Natural killer cell (primary cell): ENCODE measurements at regions of chr12 and their contacts with region 1.

Region 1: GRCh38 chr12:75437564-75437963 is 43.0 kb upstream of the GLIPR1 start:
- DNase-seq: peak in 1 of 2 donors; percentile 72
- ATAC-seq: peak; percentile 78 to 98 (median 96)
- H3K4me3 ChIP-seq: no peak overlapping the region
- H3K4me3 Mint-ChIP-seq: no peak overlapping the region
- H3K27ac ChIP-seq: no peak overlapping the region
- H3K27ac Mint-ChIP-seq: no peak overlapping the region
- H3K4me1 ChIP-seq: peaks cover 7% of the 10 kb centered on the region
- H3K4me1 Mint-ChIP-seq: peaks cover 6% of the 10 kb centered on the region in 2 donors
- H3K27me3 ChIP-seq: no peaks in the 10 kb centered on the region
- H3K27me3 Mint-ChIP-seq: peaks cover 0 to 6% of the 10 kb centered on the region in 2 donors
- CTCF ChIP-seq: peak; percentile 52

Region 2: DNA sequence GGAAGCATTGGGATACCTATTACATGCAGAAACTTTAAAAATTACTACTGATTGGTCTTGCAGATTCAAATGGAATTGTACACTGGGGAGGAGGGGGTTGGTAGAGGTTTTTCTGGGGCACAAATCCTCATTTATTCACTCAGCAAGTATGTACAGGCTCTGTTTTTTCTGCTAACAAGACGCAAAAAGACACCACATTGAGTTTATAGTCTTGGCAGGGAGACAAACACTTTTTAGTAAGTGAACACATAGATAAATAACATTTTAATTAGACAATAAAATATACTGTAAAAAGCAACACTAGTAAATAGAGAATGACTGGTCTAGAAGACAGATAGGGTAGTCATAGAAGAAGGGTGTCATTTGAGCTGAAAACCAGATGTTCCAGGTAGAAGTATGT is 22.9 kb before region 1 on chr12:
- intact Hi-C with region 1: no loop called
- DNase-seq: no peak
- ATAC-seq: no peak
- H3K4me3 ChIP-seq: no peak overlapping the region
- H3K4me3 Mint-ChIP-seq: no peak overlapping the region
- H3K27ac ChIP-seq: no peak overlapping the region
- H3K27ac Mint-ChIP-seq: no peak overlapping the region
- H3K4me1 ChIP-seq: no peaks in the 10 kb centered on the region
- H3K4me1 Mint-ChIP-seq: no peaks in the 10 kb centered on the region
- H3K27me3 ChIP-seq: no peaks in the 10 kb centered on the region
- H3K27me3 Mint-ChIP-seq: peaks cover 0 to 7% of the 10 kb centered on the region in 2 donors
- CTCF ChIP-seq: no peak

Region 3: GRCh38 chr12:75505706-75506312 is 68.2 kb after region 1 on chr12:
- intact Hi-C with region 1: loop called (anchors 1 kb)
- DNase-seq: peak in 1 of 2 donors; percentile 61
- ATAC-seq: peak; percentile 44 to 72 (median 58)
- H3K4me3 ChIP-seq: no peak overlapping the region
- H3K4me3 Mint-ChIP-seq: no peak overlapping the region
- H3K27ac ChIP-seq: no peak overlapping the region
- H3K27ac Mint-ChIP-seq: peak overlapping the region; percentile 54 to 65
- H3K4me1 ChIP-seq: no peaks in the 10 kb centered on the region
- H3K4me1 Mint-ChIP-seq: peaks cover 11 to 20% of the 10 kb centered on the region in 2 donors
- H3K27me3 ChIP-seq: no peaks in the 10 kb centered on the region
- H3K27me3 Mint-ChIP-seq: no peaks in the 10 kb centered on the region
- CTCF ChIP-seq: peak; percentile 76